ENCODE measurements at regions of chr1 and their contacts with region 1.

Region 1: DNA sequence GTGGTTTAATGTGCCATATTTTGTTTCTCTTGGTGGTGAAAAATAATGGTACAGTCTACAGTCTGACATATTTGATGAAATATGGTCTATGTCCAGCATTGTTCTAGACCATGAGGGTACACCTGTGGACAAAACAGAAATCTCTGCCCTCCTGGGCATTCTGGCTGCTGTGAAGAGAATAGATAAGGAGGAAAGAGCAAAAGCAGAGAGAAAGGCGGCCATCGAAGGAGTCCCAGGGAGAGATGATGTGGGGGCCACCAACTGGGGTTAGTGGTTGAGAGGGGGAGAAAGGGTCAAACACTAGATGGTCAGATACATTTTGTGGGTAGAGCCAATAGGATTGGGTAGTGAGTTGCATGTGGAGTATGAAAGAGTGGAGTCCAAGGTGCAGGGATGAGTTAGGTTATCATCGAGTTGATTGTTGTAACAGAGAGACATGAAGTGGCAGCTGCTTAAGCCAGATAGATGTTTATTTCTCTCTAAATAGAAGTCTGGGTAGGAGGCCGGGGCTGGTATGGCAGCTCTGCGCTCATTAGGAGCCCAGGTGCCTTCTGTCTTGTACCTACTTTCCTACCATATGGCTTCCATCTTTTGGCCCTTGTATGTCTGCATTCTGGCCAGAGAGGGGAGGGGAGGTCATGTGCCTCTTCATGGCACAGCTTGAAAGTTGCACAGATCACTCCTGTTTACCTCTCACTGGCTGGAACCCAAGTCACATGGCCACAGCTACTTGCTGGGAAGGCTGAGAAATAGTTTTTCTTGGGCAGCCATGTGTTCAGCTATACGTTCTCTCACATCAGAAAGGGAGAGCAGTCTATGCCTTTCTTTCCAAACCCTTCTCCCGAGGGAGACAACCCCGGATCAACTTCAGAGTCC is 13.0 kb downstream of the UBE4B start:
- DNase-seq: no peak
- H3K4me3 ChIP-seq: no peak overlapping the region
- H3K27ac ChIP-seq: no peak overlapping the region
- H3K4me1 ChIP-seq: peaks cover 2 to 10% (median 8%) of the 10 kb centered on the region in 4 experiments; a peak in 3 of 7 replicates
- H3K27me3 ChIP-seq: no peaks in the 10 kb centered on the region
- CTCF ChIP-seq: no peak
- EP300 ChIP-seq: no peak
- POLR2A ChIP-seq: no peak
- RAD21 ChIP-seq: no peak

Region 2: GRCh38 chr1:10032590-10033358 is 12.9 kb before region 1 on chr1 and contains the start of gene UBE4B:
- CTCF ChIA-PET with region 1: interaction called, 16 read pairs
- POLR2A ChIA-PET with region 1: interaction called, 10 read pairs
- DNase-seq: peak; percentile 95 to 99
- H3K4me3 ChIP-seq: peak within 1 kb of the TSS; percentile 85 to 99 (median 94)
- H3K27ac ChIP-seq: peak within 1 kb of the TSS; percentile 89
- H3K4me1 ChIP-seq: peaks cover 0 to 3% (median 0%) of the 10 kb centered on the region in 4 experiments; a peak in 2 of 7 replicates
- H3K27me3 ChIP-seq: no peaks in the 10 kb centered on the region
- CTCF ChIP-seq: peak; percentile 83 to 89 (median 86)
- EP300 ChIP-seq: no peak
- POLR2A ChIP-seq: peak; percentile 68 to 87
- RAD21 ChIP-seq: peak; percentile 72 to 74
- total RNA-seq, gene UBE4B: 90.1 and 91.0 TPM in 2 replicates

Region 3: DNA sequence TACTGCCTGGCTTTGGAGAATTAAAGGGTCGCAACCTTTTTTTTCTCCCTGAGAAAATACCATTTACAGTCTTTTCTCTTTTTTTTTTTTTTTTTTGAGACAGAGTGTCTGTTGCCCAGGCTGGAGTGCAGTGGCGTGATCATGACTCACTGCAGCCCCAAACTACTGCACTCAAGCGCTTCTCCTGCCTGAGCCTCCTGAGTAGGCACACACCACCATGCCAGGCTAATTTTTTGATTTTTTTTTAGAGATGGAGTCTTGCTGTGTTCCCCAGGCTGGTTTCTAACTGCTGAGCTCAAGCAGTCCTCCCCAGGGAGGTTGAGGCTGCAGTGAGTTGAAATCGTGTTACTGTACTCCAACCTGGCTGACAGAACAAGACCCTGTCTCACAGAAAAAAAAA is 11.6 kb after region 1 on chr1:
- CTCF ChIA-PET with region 1: interaction called, 11 read pairs
- POLR2A ChIA-PET with region 1: no interaction called
- DNase-seq: no peak
- H3K4me3 ChIP-seq: no peak overlapping the region
- H3K27ac ChIP-seq: no peak overlapping the region
- H3K4me1 ChIP-seq: peaks cover 0 to 6% (median under 1%) of the 10 kb centered on the region in 4 experiments; a peak in 2 of 7 replicates
- H3K27me3 ChIP-seq: no peaks in the 10 kb centered on the region
- CTCF ChIP-seq: no peak
- EP300 ChIP-seq: no peak
- POLR2A ChIP-seq: no peak
- RAD21 ChIP-seq: no peak

Region 4: DNA sequence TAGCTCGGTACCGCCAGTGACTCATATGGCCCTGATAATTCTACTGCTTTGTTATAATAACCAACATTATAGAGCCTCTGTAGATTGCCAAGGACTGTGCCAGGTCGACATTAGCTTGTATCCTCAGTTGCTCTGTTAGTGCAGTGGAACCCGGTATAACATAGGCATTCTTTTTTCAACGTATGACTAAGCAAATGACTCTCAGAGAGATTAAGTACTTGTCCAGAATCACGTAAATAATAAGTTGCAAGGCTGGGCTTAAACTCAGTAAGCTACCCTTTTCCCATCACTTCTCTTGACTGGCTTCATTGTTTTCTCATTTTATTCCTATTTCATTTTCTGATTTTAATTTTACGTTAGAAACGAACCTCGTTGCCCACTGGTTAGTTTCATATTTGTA is 72.1 kb after region 1 on chr1:
- CTCF ChIA-PET with region 1: no interaction called
- POLR2A ChIA-PET with region 1: no interaction called
- DNase-seq: no peak
- H3K4me3 ChIP-seq: no peak overlapping the region
- H3K27ac ChIP-seq: no peak overlapping the region
- H3K4me1 ChIP-seq: no peaks in the 10 kb centered on the region
- H3K27me3 ChIP-seq: no peaks in the 10 kb centered on the region
- CTCF ChIP-seq: no peak
- EP300 ChIP-seq: no peak
- POLR2A ChIP-seq: no peak
- RAD21 ChIP-seq: no peak

Measured in H1 (cell line).